Calu3 (cell line): ENCODE measurements at regions of chr11 and their contacts with region 1.

Region 1: DNA sequence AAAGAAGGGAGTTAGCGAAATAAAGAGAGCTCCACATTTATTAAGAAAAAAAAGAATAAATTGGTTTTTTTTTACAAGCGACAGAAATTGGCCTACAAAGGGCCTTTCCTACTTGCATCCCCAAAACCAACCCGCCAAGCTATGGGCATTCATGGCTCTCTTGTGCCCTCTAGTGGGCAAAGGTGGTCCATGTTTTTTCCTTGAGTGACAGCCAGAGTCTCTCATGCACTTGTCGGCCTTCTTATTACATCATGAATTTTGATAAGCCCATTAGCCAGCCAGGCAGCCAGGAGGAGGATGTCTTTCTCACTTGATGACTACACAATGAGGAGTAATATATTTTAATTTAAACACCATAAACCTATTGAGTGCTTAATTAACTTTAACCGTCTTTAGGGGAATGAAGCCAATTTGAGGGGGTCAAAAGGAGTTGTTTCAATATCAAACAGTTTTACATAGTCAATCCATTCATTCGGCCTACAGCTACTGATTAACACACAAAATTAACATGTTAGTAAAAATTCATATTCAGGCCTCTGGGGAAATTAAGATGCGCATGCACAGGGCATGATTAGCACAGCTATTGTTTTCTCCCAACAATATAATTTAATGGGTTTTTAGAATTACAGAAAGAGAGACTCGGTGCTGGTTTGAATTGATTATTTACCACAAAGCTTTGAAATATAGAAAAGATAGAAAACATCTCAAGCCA is 85.5 kb downstream of the RCN1 start:
- DNase-seq: peak; percentile 85
- H3K4me3 Mint-ChIP-seq: no peak overlapping the region
- H3K27ac Mint-ChIP-seq: no peak overlapping the region
- H3K4me1 Mint-ChIP-seq: peaks cover 7% of the 10 kb centered on the region
- H3K27me3 Mint-ChIP-seq: peaks cover 54% of the 10 kb centered on the region
- CTCF ChIP-seq: peak; percentile 74

Region 2: DNA sequence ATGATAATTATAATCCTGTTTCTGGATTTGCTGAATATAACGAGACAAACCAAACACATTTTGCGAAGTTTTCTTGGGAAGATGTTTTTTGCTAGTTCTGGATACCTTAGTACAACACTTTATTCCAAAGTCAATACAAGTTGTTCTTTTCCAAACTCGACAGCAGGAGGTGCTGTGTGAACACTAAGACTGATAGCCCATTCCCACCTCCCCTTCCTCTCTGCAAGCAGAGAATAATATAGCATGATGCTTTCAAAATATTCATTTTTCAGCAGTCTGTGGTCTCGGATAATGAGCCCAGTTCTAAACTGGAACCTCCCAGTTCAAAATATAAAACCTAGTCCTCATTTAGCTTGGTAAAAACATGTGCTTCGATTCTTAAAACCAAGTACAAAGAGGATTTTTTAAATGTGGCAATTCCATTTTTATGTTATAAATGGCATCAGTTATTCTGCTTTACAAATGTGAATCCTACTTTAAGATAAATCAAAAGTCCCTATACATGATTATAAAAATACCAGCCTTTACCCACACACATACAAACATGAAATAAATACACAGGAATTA is 936.0 kb before region 1 on chr11:
- CTCF ChIA-PET with region 1: no interaction called
- intact Hi-C with region 1: loop called (anchors 2 kb)
- DNase-seq: peak; percentile 37
- H3K4me3 Mint-ChIP-seq: no peak overlapping the region
- H3K27ac Mint-ChIP-seq: no peak overlapping the region
- H3K4me1 Mint-ChIP-seq: no peaks in the 10 kb centered on the region
- H3K27me3 Mint-ChIP-seq: no peaks in the 10 kb centered on the region
- CTCF ChIP-seq: peak; percentile 49

Region 3: GRCh38 chr11:31487848-31488247 is 688.5 kb before region 1 on chr11:
- CTCF ChIA-PET with region 1: no interaction called
- intact Hi-C with region 1: loop called (anchors 5 kb)
- DNase-seq: peak; percentile 15
- H3K4me3 Mint-ChIP-seq: no peak overlapping the region
- H3K27ac Mint-ChIP-seq: no peak overlapping the region
- H3K4me1 Mint-ChIP-seq: no peaks in the 10 kb centered on the region
- H3K27me3 Mint-ChIP-seq: no peaks in the 10 kb centered on the region
- CTCF ChIP-seq: peak; percentile 35

Region 4: DNA sequence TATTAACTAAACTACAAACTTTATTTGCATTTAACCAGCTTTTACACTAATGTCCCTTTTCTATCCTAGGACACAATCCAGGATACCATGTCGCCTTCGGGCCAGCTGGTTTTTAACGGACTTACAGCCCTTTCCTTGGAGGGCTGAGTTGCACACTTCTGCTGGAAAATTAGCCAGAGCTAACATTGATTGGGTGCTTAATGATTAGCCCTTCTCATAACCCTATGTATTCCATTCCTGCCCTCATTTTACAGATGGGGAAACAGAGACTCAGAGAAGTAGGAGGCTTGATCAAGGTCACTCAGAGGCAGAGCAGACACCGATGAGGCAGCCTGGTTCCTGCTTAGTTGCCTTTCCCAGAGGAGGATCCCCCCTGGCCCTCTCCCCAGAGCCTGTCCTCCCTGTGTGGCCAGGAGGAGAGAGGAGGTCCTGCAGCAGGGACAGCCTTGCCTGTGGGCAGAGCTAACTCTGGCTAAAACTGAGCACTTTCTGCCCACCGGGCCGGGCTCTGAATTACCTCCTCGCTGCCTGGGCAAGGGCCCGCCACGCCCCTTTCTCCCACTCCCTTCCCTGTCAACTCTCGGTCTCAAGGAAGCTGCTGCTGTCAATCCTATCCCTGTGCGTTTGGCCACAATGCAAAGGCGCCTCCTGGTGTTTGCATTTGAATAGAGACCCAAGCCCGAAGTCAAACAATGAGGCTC is 305.6 kb before region 1 on chr11:
- CTCF ChIA-PET with region 1: no interaction called
- intact Hi-C with region 1: loop called (anchors 10 kb)
- DNase-seq: peak; percentile 67
- H3K4me3 Mint-ChIP-seq: no peak overlapping the region
- H3K27ac Mint-ChIP-seq: no peak overlapping the region
- H3K4me1 Mint-ChIP-seq: no peaks in the 10 kb centered on the region
- H3K27me3 Mint-ChIP-seq: peaks cover 52% of the 10 kb centered on the region
- CTCF ChIP-seq: peak; percentile 57

Region 5: DNA sequence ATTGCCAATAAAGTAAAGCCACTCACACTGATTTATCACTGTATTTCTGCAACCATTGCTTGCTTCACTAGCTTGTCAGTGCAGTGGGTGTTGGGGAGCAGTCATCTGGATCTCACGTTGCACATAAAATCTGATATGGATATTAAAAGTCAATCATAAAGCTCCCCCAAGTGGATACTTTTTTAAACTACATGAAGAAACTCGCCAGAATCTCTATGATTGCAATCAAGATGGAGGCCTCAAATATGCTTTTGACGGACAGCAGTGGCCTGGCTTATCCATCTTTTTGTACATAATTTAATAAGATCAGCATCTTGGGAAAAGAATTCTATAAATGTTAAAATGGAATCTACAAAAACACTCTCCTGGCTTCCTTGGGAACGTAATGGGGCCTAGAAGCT is 121.2 kb after region 1 on chr11:
- CTCF ChIA-PET with region 1: no interaction called
- intact Hi-C with region 1: loop called (anchors 2 kb)
- DNase-seq: peak; percentile 2
- H3K4me3 Mint-ChIP-seq: no peak overlapping the region
- H3K27ac Mint-ChIP-seq: no peak overlapping the region
- H3K4me1 Mint-ChIP-seq: no peaks in the 10 kb centered on the region
- H3K27me3 Mint-ChIP-seq: peaks cover 63% of the 10 kb centered on the region
- CTCF ChIP-seq: peak; percentile 27